H1 (cell line): ENCODE measurements at regions of chr1 and their contacts with region 1.

Region 1: GRCh38 chr1:43991476-43992231 is at the start of gene CCDC24:
- DNase-seq: peak in 1 of 2 experiments; percentile 92
- H3K4me3 ChIP-seq: peak within 1 kb of the TSS; percentile 48 to 72 (median 64)
- H3K27ac ChIP-seq: no peak within 1 kb of the TSS
- H3K4me1 ChIP-seq: peaks cover 0 to 5% (median 4%) of the 10 kb centered on the region in 4 experiments; a peak in 5 of 7 replicates
- H3K27me3 ChIP-seq: no peaks in the 10 kb centered on the region
- CTCF ChIP-seq: no peak
- EP300 ChIP-seq: no peak; a peak in 1 of 3 replicates
- POLR2A ChIP-seq: peak; percentile 21 to 72
- RAD21 ChIP-seq: no peak
- total RNA-seq, gene CCDC24: 10.5 and 11.2 TPM in 2 replicates

Region 2: DNA sequence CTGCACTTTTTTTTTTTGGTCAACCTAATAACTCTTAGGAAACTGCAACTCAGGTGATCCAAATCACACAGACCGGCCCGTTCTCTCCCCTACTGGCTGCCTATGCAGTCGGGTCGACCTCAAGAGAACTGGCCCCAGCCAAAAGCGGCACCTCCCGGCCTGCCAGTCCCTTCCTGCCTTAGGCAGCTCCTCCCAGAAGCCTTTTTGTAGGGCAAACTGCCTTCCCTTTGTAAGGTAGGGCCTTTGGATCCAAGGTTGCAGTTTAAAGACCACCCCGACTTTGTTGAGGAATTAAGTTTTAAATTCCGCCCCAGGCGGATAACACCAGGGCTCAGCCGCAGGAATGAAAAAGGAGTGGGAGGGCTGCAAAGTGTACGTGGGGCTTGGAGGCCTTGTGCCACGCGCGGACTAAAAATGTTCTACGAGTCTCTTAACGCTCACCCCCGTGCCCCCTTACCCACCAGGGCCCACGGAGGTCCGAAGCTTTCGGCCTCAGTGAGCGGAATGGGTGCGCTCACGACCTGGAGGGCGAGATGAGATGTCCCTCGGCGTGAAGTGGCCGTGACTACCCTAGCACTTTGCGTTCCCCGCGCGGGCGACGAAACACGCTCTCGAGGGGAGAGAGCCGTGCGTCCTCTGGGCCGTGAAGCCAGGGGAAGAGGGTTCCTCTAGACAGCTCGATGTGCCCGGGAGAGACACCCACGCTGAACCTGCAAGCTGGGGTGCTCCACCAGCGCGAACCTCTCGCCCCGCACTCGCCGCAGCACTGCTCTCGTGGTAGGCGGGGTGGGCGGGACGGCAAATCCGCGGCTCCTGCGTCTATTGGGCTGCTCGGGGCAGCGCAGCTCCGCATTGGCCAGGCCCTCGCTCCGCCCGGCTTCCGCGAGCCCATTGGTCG is 284.8 kb before region 1 on chr1:
- CTCF ChIA-PET with region 1: no interaction called
- POLR2A ChIA-PET with region 1: no interaction called
- DNase-seq: peak; percentile 77 to 90
- H3K4me3 ChIP-seq: peak overlapping the region; percentile 71 to 91 (median 84)
- H3K27ac ChIP-seq: peak overlapping the region; percentile 72
- H3K4me1 ChIP-seq: peaks cover 0 to 6% (median 5%) of the 10 kb centered on the region in 4 experiments; a peak in 6 of 7 replicates
- H3K27me3 ChIP-seq: no peaks in the 10 kb centered on the region
- CTCF ChIP-seq: no peak
- EP300 ChIP-seq: no peak
- POLR2A ChIP-seq: peak; percentile 53 to 91
- RAD21 ChIP-seq: no peak

Region 3: DNA sequence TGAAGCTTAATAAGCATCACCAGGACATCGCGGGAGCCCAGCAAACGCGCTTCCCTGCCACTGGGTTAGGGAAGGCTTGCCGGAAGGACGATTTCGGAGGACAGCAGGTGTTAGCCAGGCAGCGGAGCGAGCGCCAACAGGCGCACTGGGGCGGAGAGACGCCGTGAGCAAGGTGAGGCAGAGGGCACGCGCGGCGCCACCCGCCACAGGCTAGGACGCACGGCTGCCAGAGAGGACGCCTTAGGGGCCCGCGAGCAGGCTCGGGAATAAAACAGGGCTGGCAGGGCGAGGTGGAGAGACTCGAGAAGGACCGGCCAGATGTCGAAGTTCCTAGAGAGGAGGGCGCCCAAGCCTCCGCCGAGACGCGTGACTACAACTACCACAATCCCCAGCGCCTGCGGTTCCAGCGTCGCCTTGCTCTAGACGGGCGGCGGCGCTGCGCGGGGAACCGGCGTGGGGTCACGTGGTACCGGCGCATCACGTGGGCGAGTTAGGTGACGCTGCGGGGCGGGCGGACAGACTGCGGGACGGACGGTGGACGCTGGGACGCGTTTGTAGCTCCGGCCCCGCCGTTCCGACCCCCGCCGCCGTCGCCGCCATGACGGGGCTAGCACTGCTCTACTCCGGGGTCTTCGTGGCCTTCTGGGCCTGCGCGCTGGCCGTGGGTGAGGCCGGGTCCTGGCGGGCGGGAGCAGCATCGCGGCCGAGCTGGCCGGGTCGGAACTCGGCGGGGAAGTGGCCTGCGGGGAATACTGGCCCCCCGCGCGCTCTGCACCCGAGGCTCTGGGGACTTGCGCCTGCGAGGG is 17.0 kb before region 1 on chr1 and contains the start of gene ATP6V0B:
- CTCF ChIA-PET with region 1: interaction called, 34 read pairs
- POLR2A ChIA-PET with region 1: interaction called, 189 read pairs
- DNase-seq: peak; percentile 69 to 97
- H3K4me3 ChIP-seq: peak within 1 kb of the TSS; percentile 79 to 88 (median 82)
- H3K27ac ChIP-seq: peak within 1 kb of the TSS; percentile 85
- H3K4me1 ChIP-seq: peaks cover 6 to 18% (median 12%) of the 10 kb centered on the region in 4 experiments
- H3K27me3 ChIP-seq: no peaks in the 10 kb centered on the region
- CTCF ChIP-seq: peak in 1 of 3 experiments; percentile 3; a peak in 2 of 4 replicates
- EP300 ChIP-seq: no peak
- POLR2A ChIP-seq: peak in 1 of 2 experiments; percentile 73; a peak in 2 of 3 replicates
- RAD21 ChIP-seq: no peak
- total RNA-seq, gene ATP6V0B: 105 and 106 TPM in 2 replicates

Region 4: DNA sequence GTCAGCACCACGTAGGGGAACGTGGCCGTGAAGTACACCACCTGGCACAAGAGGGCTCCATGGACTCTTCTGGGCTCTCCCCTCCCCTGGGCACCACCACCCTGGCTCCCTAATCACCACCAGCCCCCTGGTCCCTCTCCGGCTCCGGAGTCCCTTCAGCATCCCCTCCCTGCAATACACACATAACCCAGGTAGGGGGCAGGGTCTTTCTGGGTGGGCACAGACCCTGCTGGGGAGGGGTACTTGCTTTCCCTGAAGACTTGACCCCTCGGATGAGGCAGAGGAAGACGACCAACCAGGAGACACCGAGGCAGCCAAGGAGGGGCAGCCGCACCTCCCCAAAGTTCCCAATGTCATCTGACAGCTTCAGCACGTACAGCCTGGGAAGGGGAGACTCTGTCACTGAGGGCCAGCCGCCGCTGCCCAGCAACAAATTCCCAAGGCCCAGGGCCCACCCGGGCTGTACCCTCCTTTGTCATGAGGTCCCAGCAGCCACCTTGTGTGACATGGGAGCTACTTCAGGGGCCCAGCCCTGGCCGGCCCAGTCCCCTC is 11.0 kb after region 1 on chr1:
- CTCF ChIA-PET with region 1: interaction called, 71 read pairs
- POLR2A ChIA-PET with region 1: interaction called, 9 read pairs
- DNase-seq: no peak
- H3K4me3 ChIP-seq: no peak overlapping the region
- H3K27ac ChIP-seq: no peak overlapping the region
- H3K4me1 ChIP-seq: no peaks in the 10 kb centered on the region
- H3K27me3 ChIP-seq: no peaks in the 10 kb centered on the region
- CTCF ChIP-seq: peak; percentile 39 to 59 (median 58)
- EP300 ChIP-seq: no peak
- POLR2A ChIP-seq: no peak
- RAD21 ChIP-seq: peak in 1 of 2 experiments; percentile 28; a peak in 1 of 4 replicates

Region 5: GRCh38 chr1:44029906-44030604 is 38.4 kb after region 1 on chr1:
- CTCF ChIA-PET with region 1: interaction called, 68 read pairs
- POLR2A ChIA-PET with region 1: interaction called, 544 read pairs
- DNase-seq: peak in 1 of 2 experiments; percentile 92
- H3K4me3 ChIP-seq: peak overlapping the region; percentile 78 to 96 (median 86)
- H3K27ac ChIP-seq: peak overlapping the region; percentile 73; the same call in 1 of the 2 replicates
- H3K4me1 ChIP-seq: peaks cover 12 to 28% (median 18%) of the 10 kb centered on the region in 4 experiments
- H3K27me3 ChIP-seq: no peaks in the 10 kb centered on the region
- CTCF ChIP-seq: no peak
- EP300 ChIP-seq: peak in 1 of 2 experiments; percentile 3; a peak in 1 of 3 replicates
- POLR2A ChIP-seq: no peak; a peak in 1 of 3 replicates
- RAD21 ChIP-seq: no peak

Region 6: DNA sequence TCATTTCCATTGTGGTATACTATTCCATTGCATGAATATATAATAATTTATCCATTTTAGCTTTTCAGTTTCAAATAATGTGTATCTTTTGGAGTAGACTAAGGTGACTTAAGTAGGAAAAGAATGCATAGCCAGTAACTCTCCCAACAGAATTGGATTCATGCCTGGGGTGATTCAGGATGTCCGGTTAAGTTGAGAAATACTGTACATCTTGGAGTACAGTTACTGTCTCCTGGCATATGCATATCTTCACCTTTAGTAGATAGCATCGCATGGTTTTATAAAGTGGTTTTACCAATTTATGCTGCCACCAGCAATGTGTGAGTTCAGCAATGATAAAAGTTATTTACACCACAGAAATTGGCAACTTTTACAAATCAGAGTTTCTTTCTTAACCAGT is 58.2 kb after region 1 on chr1:
- CTCF ChIA-PET with region 1: interaction called, 478 read pairs
- POLR2A ChIA-PET with region 1: interaction called, 3 read pairs
- DNase-seq: no peak
- H3K4me3 ChIP-seq: no peak overlapping the region
- H3K27ac ChIP-seq: no peak overlapping the region
- H3K4me1 ChIP-seq: peaks cover 0 to 3% (median under 1%) of the 10 kb centered on the region in 4 experiments; a peak in 1 of 7 replicates
- H3K27me3 ChIP-seq: peaks cover 0 to 5% (median 0%) of the 10 kb centered on the region in 4 experiments; a peak in 3 of 7 replicates
- CTCF ChIP-seq: no peak
- EP300 ChIP-seq: no peak
- POLR2A ChIP-seq: no peak
- RAD21 ChIP-seq: no peak